Caco-2 (cell line): ENCODE measurements at regions of chr5 and their contacts with region 1.

Region 1: GRCh38 chr5:80204808-80205614 is 50.8 kb downstream of the SERINC5 start:
- DNase-seq: peak; percentile 87 to 92
- H3K4me3 ChIP-seq: no peak overlapping the region
- H3K4me3 Mint-ChIP-seq: peak overlapping the region; percentile 15
- H3K27ac Mint-ChIP-seq: peak overlapping the region; percentile 71
- H3K4me1 ChIP-seq: peaks cover 33% of the 10 kb centered on the region
- H3K4me1 Mint-ChIP-seq: peaks cover 42% of the 10 kb centered on the region
- H3K27me3 ChIP-seq: no peaks in the 10 kb centered on the region
- H3K27me3 Mint-ChIP-seq: no peaks in the 10 kb centered on the region
- CTCF ChIP-seq: peak; percentile 27 to 70

Region 2: DNA sequence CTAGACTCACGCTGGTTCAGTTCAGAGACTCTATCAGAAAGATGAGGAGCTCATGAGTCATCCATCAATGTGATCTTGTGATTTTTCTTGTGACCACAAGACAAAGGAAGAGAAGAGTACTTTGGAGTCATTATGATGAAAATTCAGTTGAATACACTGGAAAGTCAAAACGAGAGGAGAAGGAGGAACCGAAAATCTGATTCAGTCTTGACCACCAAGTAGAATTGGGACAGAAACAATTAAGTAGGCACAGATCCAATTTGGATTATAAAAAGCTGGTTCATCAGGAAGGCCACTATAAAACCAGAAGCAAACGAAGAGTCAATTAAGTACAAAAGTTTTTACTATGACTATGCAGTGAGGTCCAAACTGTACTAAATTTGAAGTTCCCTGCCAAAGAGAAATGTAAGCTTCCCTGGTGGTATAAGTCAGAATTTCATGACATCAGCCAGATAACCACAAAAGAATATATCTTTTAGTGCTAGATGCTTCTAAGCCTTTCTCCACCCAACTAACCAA is 79.0 kb before region 1 on chr5:
- CTCF ChIA-PET with region 1: interaction called, 3 read pairs
- POLR2A ChIA-PET with region 1: no interaction called
- intact Hi-C with region 1: loop called (anchors 2 kb)
- DNase-seq: no peak
- H3K4me3 ChIP-seq: no peak overlapping the region
- H3K4me3 Mint-ChIP-seq: no peak overlapping the region
- H3K27ac Mint-ChIP-seq: peak overlapping the region; percentile 5
- H3K4me1 ChIP-seq: peaks cover 36% of the 10 kb centered on the region
- H3K4me1 Mint-ChIP-seq: peaks cover 31% of the 10 kb centered on the region
- H3K27me3 ChIP-seq: no peaks in the 10 kb centered on the region
- H3K27me3 Mint-ChIP-seq: no peaks in the 10 kb centered on the region
- CTCF ChIP-seq: peak in 1 of 2 experiments; percentile 17

Region 3: DNA sequence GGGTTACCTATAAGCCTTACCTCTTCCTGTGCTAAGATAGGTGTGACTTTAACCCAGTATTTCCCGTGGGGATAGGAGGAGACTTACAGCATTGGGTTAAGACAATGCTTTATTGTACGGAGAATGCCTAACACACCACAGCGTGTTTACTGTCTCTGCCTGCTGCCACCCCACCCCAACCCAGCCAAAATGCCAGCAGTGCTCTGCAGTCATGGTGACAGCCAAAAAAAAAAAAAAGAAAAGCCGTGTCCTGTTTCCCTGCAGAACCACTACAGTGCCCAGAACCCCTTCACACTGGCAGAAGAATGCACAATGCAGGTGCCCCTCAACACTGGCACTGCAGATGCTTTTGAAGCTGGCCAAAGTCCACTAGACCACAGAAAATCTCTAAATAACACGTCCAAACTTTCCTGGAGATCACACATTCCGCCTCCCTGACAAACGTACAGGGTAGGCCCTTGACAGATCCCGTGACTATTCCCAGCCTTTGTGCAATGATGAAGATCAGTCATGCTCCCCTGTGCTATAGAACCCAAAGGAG is 51.4 kb before region 1 on chr5:
- CTCF ChIA-PET with region 1: no interaction called
- POLR2A ChIA-PET with region 1: no interaction called
- intact Hi-C with region 1: no loop called
- DNase-seq: no peak
- H3K4me3 ChIP-seq: no peak overlapping the region
- H3K4me3 Mint-ChIP-seq: no peak overlapping the region
- H3K27ac Mint-ChIP-seq: no peak overlapping the region
- H3K4me1 ChIP-seq: peaks cover 16% of the 10 kb centered on the region
- H3K4me1 Mint-ChIP-seq: peaks cover 43% of the 10 kb centered on the region
- H3K27me3 ChIP-seq: no peaks in the 10 kb centered on the region
- H3K27me3 Mint-ChIP-seq: no peaks in the 10 kb centered on the region
- CTCF ChIP-seq: no peak

Region 4: DNA sequence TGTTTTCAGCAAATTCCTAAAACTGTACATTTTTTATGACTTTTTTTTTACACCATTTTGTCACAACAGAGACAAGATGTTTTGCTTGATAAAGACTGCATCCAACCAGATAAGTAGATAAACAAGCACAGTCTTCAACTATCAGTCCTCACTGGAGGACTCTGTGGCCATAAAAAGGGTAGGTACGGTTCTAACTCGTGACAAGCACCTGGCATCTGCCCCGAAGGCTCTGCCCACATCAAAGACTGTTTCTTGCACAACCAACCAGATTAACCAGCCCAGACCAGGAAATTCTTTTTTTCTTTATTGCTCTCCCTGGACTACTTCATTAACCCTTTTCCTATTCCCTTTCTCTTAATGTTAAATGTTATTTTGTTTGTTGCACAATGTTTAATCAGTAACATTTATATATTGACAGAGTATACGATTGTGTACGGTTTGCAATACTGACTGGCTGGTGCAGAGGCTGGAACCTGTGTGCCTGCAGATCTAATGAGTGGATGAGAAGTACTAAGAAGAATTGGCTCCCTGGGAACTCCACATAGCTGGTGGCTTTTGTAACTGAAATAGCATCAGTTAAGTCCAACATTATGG is 23.3 kb before region 1 on chr5:
- CTCF ChIA-PET with region 1: interaction called, 10 read pairs
- POLR2A ChIA-PET with region 1: interaction called, 5 read pairs
- intact Hi-C with region 1: loop called (anchors 1 kb)
- DNase-seq: peak; percentile 92 to 93
- H3K4me3 ChIP-seq: no peak overlapping the region
- H3K4me3 Mint-ChIP-seq: peak overlapping the region; percentile 66
- H3K27ac Mint-ChIP-seq: peak overlapping the region; percentile 92
- H3K4me1 ChIP-seq: peaks cover 76% of the 10 kb centered on the region
- H3K4me1 Mint-ChIP-seq: peaks cover 71% of the 10 kb centered on the region
- H3K27me3 ChIP-seq: no peaks in the 10 kb centered on the region
- H3K27me3 Mint-ChIP-seq: no peaks in the 10 kb centered on the region
- CTCF ChIP-seq: no peak

Region 5: DNA sequence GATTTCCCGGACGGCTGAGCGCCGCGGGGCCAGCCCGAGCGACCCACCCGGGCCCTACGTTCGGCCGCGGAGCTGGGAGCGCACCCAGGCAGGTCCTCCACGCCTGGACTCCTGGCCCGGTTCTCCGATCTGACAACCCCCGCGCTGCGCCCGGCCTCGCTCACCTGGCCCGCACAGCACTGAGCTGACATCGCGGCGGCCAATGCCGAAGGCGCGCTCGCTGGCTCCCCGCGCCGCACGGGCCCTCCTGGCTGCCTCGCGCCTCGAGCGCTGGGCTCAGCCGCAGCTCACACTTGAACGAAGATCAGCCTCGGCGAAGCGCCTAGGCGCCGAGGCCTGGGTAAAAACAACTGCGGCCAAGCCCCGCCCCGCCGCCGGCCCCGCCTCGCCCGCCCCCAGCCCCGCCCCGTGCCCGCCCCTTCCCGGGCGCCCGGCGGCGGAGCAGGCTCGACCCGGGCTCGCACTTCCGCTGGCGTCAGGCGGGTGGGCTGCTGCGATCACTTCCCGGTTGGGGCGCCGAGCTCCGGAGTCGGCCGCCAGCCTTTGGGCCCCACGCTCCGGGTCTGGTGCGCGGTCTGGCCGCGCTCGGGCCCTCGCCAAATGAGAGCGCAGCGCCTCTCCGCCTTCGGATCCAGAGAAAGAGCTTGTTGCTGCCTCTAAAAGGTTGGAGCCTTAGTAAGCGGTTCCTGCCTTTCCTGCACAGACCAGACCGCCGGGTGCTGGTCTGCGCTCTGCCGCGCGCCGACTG is 50.9 kb after region 1 on chr5 and contains the start of gene SERINC5:
- CTCF ChIA-PET with region 1: interaction called, 10 read pairs
- POLR2A ChIA-PET with region 1: interaction called, 10 read pairs
- intact Hi-C with region 1: loop called (anchors 2 kb)
- DNase-seq: peak; percentile 85
- H3K4me3 ChIP-seq: peak within 1 kb of the TSS; percentile 84
- H3K4me3 Mint-ChIP-seq: peak within 1 kb of the TSS; percentile 91
- H3K27ac Mint-ChIP-seq: peak within 1 kb of the TSS; percentile 86
- H3K4me1 ChIP-seq: peaks cover 44% of the 10 kb centered on the region
- H3K4me1 Mint-ChIP-seq: peaks cover 33% of the 10 kb centered on the region
- H3K27me3 ChIP-seq: no peaks in the 10 kb centered on the region
- H3K27me3 Mint-ChIP-seq: no peaks in the 10 kb centered on the region
- CTCF ChIP-seq: no peak
- total RNA-seq, gene SERINC5: 225 and 226 TPM in 2 replicates

Region 6: DNA sequence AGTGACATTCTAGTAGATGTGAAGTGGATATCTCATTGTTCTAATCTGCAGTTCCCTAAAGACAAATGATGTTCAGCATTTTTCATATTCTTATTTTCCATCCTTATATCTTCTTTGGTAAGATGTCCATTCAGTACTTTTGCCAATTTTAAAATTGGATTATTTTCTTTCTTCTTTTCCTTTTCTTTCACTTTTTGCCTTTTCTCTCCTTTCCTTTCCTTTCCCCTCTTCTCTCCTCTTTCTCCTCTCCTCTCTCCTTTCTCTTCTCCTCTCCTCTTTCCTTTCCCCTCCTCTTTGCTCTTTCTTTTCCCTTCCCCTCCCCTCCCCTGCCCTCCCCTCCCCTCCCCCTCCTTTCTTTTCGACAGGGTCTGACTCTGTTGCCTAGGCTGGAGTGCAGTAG is 213.0 kb after region 1 on chr5:
- CTCF ChIA-PET with region 1: no interaction called
- POLR2A ChIA-PET with region 1: no interaction called
- intact Hi-C with region 1: no loop called
- DNase-seq: no peak
- H3K4me3 ChIP-seq: no peak overlapping the region
- H3K4me3 Mint-ChIP-seq: no peak overlapping the region
- H3K27ac Mint-ChIP-seq: no peak overlapping the region
- H3K4me1 ChIP-seq: no peaks in the 10 kb centered on the region
- H3K4me1 Mint-ChIP-seq: no peaks in the 10 kb centered on the region
- H3K27me3 ChIP-seq: no peaks in the 10 kb centered on the region
- H3K27me3 Mint-ChIP-seq: no peaks in the 10 kb centered on the region
- CTCF ChIP-seq: no peak

Region 7: DNA sequence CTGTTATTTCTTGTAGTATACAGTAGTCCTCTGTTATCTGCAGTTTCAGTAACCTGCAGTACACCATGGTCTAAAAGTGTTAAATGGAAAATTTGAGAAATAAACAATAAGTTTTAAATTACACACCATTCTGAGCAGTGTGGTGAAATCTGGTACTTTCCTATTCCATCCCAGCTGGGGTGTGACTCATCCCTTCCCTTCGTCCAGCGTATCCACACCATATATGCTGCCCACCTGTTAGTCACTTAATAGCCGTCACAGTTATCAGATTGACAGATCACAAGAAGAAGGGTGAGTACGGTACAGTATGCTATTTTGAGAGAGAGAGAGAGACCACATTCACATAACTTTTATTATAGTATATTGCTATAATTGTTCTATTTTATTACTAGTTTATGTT is 311.8 kb after region 1 on chr5:
- CTCF ChIA-PET with region 1: no interaction called
- POLR2A ChIA-PET with region 1: no interaction called
- intact Hi-C with region 1: no loop called
- DNase-seq: no peak
- H3K4me3 ChIP-seq: no peak overlapping the region
- H3K4me3 Mint-ChIP-seq: no peak overlapping the region
- H3K27ac Mint-ChIP-seq: no peak overlapping the region
- H3K4me1 ChIP-seq: no peaks in the 10 kb centered on the region
- H3K4me1 Mint-ChIP-seq: no peaks in the 10 kb centered on the region
- H3K27me3 ChIP-seq: no peaks in the 10 kb centered on the region
- H3K27me3 Mint-ChIP-seq: no peaks in the 10 kb centered on the region
- CTCF ChIP-seq: no peak